Activated CD4-positive, alpha-beta T cell treated with anti-CD3 and anti-CD28 coated beads, Interleukin-2, amount 10 ng/mL, durations not matched to agents 24 days and 14 days (primary cell): ENCODE measurements at regions of chr12 and their contacts with region 1.

Region 1: DNA sequence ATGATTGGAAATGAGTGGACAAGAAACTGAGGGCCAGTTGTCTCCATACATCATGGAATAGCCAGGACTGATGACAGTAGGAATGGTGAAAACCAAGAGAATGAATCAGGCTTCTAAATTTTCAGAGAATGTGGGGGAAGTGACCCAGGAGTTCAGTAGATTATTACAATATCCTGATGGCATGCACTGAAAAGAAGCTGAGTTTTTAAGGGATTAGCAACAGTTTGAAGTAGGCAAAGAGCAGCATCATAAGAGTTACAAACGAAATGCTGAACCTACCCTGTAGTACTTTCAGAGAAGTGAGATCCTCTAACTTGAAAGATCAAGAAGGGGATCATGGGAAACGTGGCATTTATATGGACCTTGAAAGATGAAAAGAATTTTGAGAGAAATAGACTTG is 13.2 kb downstream of the SLC2A14 start:
- DNase-seq: no peak
- H3K4me3 Mint-ChIP-seq: no peak overlapping the region
- H3K27ac Mint-ChIP-seq: no peak overlapping the region
- H3K4me1 Mint-ChIP-seq: peaks cover 10% of the 10 kb centered on the region
- H3K27me3 Mint-ChIP-seq: peaks cover 14% of the 10 kb centered on the region

Region 2: GRCh38 chr12:7645394-7646177 is 214.0 kb before region 1 on chr12:
- intact Hi-C with region 1: no loop called
- DNase-seq: peak; percentile 76
- H3K4me3 Mint-ChIP-seq: no peak overlapping the region
- H3K27ac Mint-ChIP-seq: no peak overlapping the region
- H3K4me1 Mint-ChIP-seq: peaks cover 5% of the 10 kb centered on the region
- H3K27me3 Mint-ChIP-seq: peaks cover 7% of the 10 kb centered on the region

Region 3: DNA sequence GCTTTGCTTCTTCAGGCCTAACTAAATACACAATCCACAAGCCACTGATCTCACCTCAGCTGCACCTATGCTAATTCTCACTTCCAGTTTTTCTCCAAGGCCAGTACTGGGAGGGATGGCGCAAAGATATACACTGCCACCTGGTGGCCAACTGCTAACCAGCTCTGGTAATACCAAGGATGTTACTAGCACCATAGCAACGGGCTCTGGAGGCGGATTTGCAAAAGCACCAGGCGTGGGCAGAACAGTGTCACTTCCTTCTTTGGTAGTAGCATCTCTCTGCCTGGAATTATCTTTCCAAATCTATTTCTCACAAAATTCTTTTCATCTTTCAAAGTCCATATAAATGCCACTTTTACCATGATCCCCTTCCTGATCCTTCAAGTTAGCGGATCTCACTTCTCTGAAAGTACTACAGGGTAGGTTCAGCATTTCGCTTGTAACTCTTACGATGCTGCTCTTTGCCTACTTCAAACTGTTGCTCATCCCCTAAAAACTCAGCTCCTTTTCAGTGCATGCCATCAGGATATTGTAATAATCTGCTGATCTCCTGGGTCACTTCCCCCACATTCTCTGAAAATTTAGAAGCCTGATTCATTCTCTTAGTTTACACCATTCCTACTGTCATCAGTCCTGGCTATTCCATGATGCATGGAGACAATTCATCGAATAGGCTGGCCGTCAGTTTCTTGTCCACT is 135.9 kb after region 1 on chr12:
- intact Hi-C with region 1: loop called (anchors 1 kb)
- DNase-seq: peak; percentile 94
- H3K4me3 Mint-ChIP-seq: no peak overlapping the region
- H3K27ac Mint-ChIP-seq: no peak overlapping the region
- H3K4me1 Mint-ChIP-seq: peaks cover 22% of the 10 kb centered on the region
- H3K27me3 Mint-ChIP-seq: no peaks in the 10 kb centered on the region

Region 4: DNA sequence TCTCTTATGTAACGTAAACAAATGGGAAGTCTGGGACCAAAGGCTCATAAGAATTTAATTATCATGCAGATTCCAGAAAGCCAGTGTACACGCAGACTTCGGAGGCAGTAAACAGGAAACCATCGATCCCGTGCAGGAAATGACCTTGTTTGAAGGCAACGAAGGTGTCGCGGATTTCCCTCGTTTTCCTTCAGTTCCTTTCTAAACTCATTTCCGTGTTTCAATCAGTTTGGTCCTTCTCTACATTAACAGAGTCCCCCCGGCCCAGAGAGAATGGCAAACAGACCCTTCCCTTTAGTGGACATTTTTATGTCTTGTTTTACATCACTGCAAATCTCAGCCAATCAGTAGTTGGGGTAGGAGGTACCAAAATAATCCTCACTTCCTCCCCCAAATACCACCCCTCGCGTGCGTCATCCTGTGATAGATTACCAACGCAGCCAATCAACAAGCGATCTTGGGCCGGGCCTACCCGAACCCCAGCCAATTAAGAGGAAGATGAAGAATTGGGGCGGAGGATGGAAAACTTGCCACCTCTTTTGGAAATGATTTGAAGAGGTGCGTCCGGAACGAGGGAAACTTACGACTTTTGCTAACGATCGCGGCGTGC is 166.8 kb after region 1 on chr12:
- intact Hi-C with region 1: loop called (anchors 2 kb)
- DNase-seq: peak; percentile 99
- H3K4me3 Mint-ChIP-seq: peak overlapping the region; percentile 91
- H3K27ac Mint-ChIP-seq: peak overlapping the region; percentile 100
- H3K4me1 Mint-ChIP-seq: peaks cover 18% of the 10 kb centered on the region
- H3K27me3 Mint-ChIP-seq: no peaks in the 10 kb centered on the region